AG04450 (cell line): ENCODE measurements at regions of chr16 and their contacts with region 1.

Region 1: GRCh38 chr16:63442246-63442645 is 1406.0 kb upstream of the CDH8 start:
- DNase-seq: no peak
- H3K4me3 ChIP-seq: no peak overlapping the region
- H3K27ac ChIP-seq: no peak overlapping the region
- H3K27me3 ChIP-seq: no peaks in the 10 kb centered on the region
- CTCF ChIP-seq: no peak

Region 2: GRCh38 chr16:63385714-63386432 is 56.4 kb before region 1 on chr16:
- CTCF ChIA-PET with region 1: no interaction called
- POLR2A ChIA-PET with region 1: no interaction called
- DNase-seq: no peak
- H3K4me3 ChIP-seq: no peak overlapping the region
- H3K27ac ChIP-seq: no peak overlapping the region
- H3K27me3 ChIP-seq: no peaks in the 10 kb centered on the region
- CTCF ChIP-seq: no peak

Region 3: GRCh38 chr16:63481060-63481459 is 38.8 kb after region 1 on chr16:
- CTCF ChIA-PET with region 1: interaction called, 12 read pairs
- POLR2A ChIA-PET with region 1: no interaction called
- DNase-seq: no peak
- H3K4me3 ChIP-seq: no peak overlapping the region
- H3K27ac ChIP-seq: no peak overlapping the region
- H3K27me3 ChIP-seq: no peaks in the 10 kb centered on the region
- CTCF ChIP-seq: no peak